ENCODE measurements at regions of chr12 and their contacts with region 1.

Region 1: GRCh38 chr12:80400571-80400991 is 43.5 kb upstream of the PTPRQ start:
- DNase-seq: no peak
- H3K4me3 ChIP-seq: no peak overlapping the region
- H3K27ac ChIP-seq: no peak overlapping the region
- H3K4me1 ChIP-seq: no peaks in the 10 kb centered on the region
- H3K27me3 ChIP-seq: peaks cover 7% of the 10 kb centered on the region
- CTCF ChIP-seq: no peak

Region 2: GRCh38 chr12:80321649-80322048 is 78.9 kb before region 1 on chr12:
- CTCF ChIA-PET with region 1: no interaction called
- dilution Hi-C with region 1: no loop called
- in situ Hi-C with region 1: no loop called
- intact Hi-C with region 1: loop called (anchors 10 kb)
- DNase-seq: peak; percentile 68
- H3K4me3 ChIP-seq: no peak overlapping the region
- H3K27ac ChIP-seq: no peak overlapping the region
- H3K4me1 ChIP-seq: peaks cover 8% of the 10 kb centered on the region
- H3K27me3 ChIP-seq: no peaks in the 10 kb centered on the region
- CTCF ChIP-seq: no peak

Measured in mammary epithelial cell (primary cell).